MCF 10A (cell line): ENCODE measurements at regions of chr12 and their contacts with region 1.

Region 1: GRCh38 chr12:62813031-62813829 is 121.7 kb downstream of the PPM1H start:
- DNase-seq: peak; percentile 76
- H3K4me3 Mint-ChIP-seq: no peak overlapping the region
- H3K27ac Mint-ChIP-seq: no peak overlapping the region
- H3K4me1 Mint-ChIP-seq: peaks cover 7% of the 10 kb centered on the region
- H3K27me3 Mint-ChIP-seq: no peaks in the 10 kb centered on the region
- CTCF ChIP-seq: peak; percentile 50

Region 2: GRCh38 chr12:62581288-62582064 is 231.8 kb before region 1 on chr12:
- CTCF ChIA-PET with region 1: interaction called, 13 read pairs
- POLR2A ChIA-PET with region 1: no interaction called
- intact Hi-C with region 1: no loop called
- DNase-seq: peak; percentile 53
- H3K4me3 Mint-ChIP-seq: no peak overlapping the region
- H3K27ac Mint-ChIP-seq: no peak overlapping the region
- H3K4me1 Mint-ChIP-seq: no peaks in the 10 kb centered on the region
- H3K27me3 Mint-ChIP-seq: no peaks in the 10 kb centered on the region
- CTCF ChIP-seq: peak; percentile 49

Region 3: DNA sequence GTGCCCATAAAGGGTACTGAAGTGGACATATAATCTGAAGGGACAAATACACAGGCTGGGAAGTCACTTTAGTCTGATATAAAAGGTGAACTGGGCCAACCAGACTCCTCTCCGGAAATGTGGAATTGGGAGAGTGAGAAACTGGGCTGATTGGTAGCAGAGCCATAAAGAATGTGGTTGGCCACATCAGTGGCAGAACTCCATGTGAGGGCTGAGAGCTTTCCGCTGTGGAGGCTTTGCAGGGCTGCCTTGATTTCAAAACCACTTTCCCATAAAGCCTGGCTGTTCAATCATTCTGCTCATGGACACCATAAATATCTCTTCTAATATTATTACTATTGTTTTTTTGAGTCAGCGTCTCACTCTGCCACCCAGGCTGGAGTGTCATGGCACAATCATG is 126.3 kb before region 1 on chr12:
- CTCF ChIA-PET with region 1: no interaction called
- POLR2A ChIA-PET with region 1: no interaction called
- intact Hi-C with region 1: no loop called
- DNase-seq: no peak
- H3K4me3 Mint-ChIP-seq: no peak overlapping the region
- H3K27ac Mint-ChIP-seq: no peak overlapping the region
- H3K4me1 Mint-ChIP-seq: peaks cover 8% of the 10 kb centered on the region
- H3K27me3 Mint-ChIP-seq: no peaks in the 10 kb centered on the region
- CTCF ChIP-seq: no peak

Region 4: DNA sequence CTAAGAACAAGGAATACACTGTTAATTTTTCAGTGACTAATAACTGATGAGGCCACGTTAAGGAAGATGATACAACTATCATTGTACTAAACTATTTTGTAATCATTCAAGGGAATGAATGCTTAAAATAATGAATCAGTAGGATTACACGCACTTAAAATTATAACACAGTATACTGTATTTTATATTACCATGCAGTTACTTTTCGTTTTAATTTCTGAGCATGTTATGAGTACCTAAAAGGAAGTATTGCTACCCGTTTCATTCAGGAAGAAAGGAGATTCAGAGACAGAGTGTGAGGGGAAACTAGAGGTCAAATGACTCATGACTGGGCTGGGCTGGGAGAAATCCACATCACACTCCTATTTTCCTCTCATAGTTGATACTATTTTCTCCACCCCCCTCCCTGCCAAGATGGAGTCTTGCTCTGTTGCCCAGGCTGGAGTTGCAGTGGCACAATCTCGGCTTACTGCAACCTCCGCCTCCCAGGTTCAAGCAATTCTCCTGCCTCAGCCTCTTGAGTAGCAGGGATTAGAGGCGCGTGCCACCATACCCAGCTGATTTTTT is 80.3 kb before region 1 on chr12:
- CTCF ChIA-PET with region 1: no interaction called
- POLR2A ChIA-PET with region 1: no interaction called
- intact Hi-C with region 1: no loop called
- DNase-seq: peak; percentile 60
- H3K4me3 Mint-ChIP-seq: no peak overlapping the region
- H3K27ac Mint-ChIP-seq: no peak overlapping the region
- H3K4me1 Mint-ChIP-seq: peaks cover 23% of the 10 kb centered on the region
- H3K27me3 Mint-ChIP-seq: no peaks in the 10 kb centered on the region
- CTCF ChIP-seq: no peak

Region 5: DNA sequence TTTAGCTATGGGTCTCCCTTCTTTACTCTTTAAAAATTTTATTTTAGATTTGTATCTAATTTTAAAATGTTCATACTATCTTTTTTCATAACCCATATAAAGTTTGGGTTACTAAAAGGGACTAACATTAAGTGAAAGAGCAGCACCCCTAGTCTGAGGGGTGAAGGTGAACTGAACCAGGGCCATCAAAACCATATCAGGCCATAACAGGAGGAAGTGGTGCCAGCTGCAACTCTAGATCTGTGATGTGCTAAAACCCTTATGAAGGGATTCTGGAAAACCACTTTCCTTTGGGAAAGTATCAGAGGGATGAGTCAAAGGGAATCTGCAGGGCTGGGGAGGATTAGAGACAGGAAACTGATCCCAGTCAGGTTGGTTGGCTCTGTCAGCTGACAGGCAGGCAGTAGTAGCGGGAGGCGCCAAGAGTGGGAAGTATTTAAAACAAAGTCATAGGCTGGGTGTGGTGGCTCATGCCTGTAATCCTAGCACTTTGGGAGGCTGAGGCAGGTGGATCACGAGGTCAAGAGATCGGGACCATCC is 40.7 kb before region 1 on chr12:
- CTCF ChIA-PET with region 1: no interaction called
- POLR2A ChIA-PET with region 1: no interaction called
- intact Hi-C with region 1: no loop called
- DNase-seq: peak; percentile 12
- H3K4me3 Mint-ChIP-seq: no peak overlapping the region
- H3K27ac Mint-ChIP-seq: no peak overlapping the region
- H3K4me1 Mint-ChIP-seq: peaks cover 12% of the 10 kb centered on the region
- H3K27me3 Mint-ChIP-seq: no peaks in the 10 kb centered on the region
- CTCF ChIP-seq: no peak

Region 6: DNA sequence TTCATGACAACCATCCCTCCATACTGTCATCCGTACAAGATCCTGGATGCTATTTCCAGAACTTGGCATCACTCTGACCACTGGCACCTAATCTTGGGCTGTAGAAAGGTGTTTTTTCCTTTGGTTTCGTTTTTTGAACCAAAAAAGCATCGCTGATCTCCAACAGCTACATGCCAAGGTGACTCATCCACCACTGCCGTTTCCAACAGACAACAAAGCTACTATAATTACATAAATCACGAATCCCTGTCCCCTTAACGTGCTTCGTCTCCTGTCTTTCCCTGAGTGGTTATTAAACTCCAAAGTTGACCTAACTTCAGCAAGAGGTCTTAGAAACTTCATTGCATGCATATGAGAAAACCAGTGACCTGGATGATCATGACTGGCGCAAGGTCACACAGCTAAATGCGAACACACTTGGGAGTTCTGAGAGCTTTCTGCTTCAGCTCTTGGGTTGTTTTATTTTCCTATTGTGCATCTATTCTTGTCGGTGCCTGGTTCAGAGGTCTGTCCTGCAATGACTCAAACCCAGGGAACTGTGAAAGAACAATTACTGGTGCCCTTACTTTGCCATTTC is 21.8 kb after region 1 on chr12:
- CTCF ChIA-PET with region 1: interaction called, 20 read pairs
- POLR2A ChIA-PET with region 1: no interaction called
- intact Hi-C with region 1: no loop called
- DNase-seq: peak; percentile 50
- H3K4me3 Mint-ChIP-seq: no peak overlapping the region
- H3K27ac Mint-ChIP-seq: no peak overlapping the region
- H3K4me1 Mint-ChIP-seq: peaks cover 10% of the 10 kb centered on the region
- H3K27me3 Mint-ChIP-seq: no peaks in the 10 kb centered on the region
- CTCF ChIP-seq: no peak

Region 7: GRCh38 chr12:62934799-62935674 is 121.8 kb after region 1 on chr12 and contains the start of gene PPM1H:
- CTCF ChIA-PET with region 1: interaction called, 21 read pairs
- POLR2A ChIA-PET with region 1: no interaction called
- intact Hi-C with region 1: loop called (anchors 2 kb)
- DNase-seq: peak; percentile 48
- H3K4me3 Mint-ChIP-seq: peak within 1 kb of the TSS; percentile 84
- H3K27ac Mint-ChIP-seq: peak within 1 kb of the TSS; percentile 61
- H3K4me1 Mint-ChIP-seq: peaks cover 13% of the 10 kb centered on the region
- H3K27me3 Mint-ChIP-seq: peaks cover 20% of the 10 kb centered on the region
- CTCF ChIP-seq: peak; percentile 40
- total RNA-seq, gene PPM1H: 0.49 and 2.0 TPM in 2 replicates